HEK293 (cell line): ENCODE measurements at regions of chr22 and their contacts with region 1.

Region 1: DNA sequence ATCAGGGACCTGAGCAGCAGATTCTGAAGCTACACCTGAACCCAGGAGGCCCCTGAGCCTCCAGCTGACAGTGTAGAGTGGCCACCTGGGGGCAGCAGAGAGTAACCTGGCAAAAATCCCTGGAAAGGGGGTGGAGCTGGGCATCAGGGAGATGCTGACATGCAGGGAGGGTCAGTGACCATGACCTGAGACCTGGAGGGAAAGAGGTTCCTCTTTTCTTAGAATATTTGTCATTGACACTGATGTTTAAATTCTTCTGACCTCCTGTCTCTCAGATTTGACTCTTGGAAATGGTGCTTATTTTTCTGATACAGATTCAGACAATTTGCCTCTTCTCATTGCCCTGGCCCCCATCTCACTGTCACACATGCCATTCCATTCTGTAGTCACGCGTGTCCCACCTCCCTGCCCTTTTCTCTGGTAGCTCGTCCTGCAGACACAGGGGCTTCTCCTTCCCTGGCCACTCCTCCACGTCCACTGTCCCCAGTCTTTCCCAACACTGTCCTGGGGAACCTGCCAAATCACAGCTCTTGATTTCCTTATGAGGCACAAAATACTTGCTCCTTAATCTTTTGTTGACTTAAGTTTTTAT is 117.2 kb upstream of the IGLL5 start:
- H3K4me3 ChIP-seq: no peak overlapping the region
- H3K27ac ChIP-seq: no peak overlapping the region
- H3K4me1 ChIP-seq: no peaks in the 10 kb centered on the region
- CTCF ChIP-seq: peak; percentile 56

Region 2: GRCh38 chr22:22463855-22464540 is 306.4 kb before region 1 on chr22:
- CTCF ChIA-PET with region 1: interaction called, 14 read pairs
- POLR2A ChIA-PET with region 1: no interaction called
- H3K4me3 ChIP-seq: no peak overlapping the region
- H3K27ac ChIP-seq: no peak overlapping the region
- H3K4me1 ChIP-seq: no peaks in the 10 kb centered on the region
- CTCF ChIP-seq: peak; percentile 77

Region 3: DNA sequence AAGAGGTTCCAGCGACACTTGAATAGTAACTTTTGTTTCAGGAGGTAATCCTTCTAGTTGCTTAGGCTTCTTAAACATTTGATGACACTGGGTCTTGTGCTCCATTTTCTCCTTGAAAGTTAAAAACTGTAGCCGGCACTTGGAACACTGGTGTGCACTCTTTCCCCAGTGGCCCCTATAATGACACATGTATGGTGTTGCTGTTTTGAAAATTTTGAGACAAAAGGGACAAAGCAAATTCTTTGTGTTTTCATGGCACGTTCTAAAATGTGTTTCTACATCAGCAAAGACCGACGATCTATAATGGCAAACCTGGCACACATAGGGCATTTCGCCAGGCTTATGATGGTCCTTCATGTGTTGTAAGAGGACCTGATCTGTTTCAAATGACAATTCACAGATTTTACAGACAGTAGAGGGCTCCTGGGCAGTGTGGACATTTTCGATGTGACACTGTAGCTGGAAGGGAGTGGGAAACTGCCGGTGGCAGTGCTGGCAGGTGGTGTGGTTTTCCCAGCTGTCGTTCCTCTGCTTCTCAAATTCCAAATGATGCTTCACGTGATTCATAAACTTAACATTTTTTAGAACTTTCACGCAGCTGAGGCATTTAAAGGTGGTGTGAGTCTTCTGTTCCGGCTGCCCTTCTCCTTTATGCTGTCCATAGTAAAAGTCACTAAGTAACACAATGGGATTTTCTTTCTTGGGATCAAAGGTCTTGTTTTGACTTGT is 282.3 kb before region 1 on chr22:
- CTCF ChIA-PET with region 1: no interaction called
- POLR2A ChIA-PET with region 1: no interaction called
- H3K4me3 ChIP-seq: no peak overlapping the region
- H3K27ac ChIP-seq: no peak overlapping the region
- H3K4me1 ChIP-seq: no peaks in the 10 kb centered on the region
- CTCF ChIP-seq: no peak

Region 4: DNA sequence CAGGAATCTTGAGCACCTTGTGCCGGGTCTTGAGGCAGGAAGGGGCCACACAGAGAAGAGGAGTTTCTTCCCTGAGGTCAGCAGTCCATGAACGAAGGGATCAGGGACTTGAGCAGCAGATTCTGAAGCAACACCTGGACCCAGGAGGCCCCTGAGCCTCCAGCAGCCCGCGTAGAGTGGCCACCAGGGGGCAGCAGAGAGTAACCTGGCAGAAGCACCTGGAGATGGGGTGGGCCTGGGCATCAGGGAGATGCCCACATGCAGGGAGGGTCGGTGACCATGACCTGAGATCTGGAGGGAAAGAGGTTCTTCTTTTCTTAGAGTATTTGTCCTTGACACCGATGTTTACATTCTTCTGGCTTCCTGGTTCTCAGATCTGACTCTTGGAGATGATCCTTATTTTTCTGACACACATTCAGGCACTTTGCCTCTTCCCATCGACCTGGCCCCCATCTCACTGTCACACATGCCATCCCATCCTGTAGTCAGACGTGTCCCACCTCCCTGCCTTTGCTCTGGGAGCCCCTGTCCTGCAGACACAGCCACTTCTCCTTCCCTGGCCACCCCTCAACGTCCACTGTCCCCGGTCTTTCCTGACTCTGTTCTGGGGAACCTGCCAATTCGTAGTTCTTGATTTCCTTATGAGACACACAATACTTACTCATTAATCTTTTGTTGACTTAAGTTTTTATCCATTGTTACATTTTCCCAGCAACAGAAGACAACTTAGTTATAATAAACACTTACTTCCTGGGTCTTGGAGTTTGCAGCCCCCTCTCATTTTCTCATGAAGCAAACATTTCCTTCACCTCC is 59.5 kb before region 1 on chr22:
- CTCF ChIA-PET with region 1: interaction called, 13 read pairs
- POLR2A ChIA-PET with region 1: no interaction called
- H3K4me3 ChIP-seq: no peak overlapping the region
- H3K27ac ChIP-seq: no peak overlapping the region
- H3K4me1 ChIP-seq: no peaks in the 10 kb centered on the region
- CTCF ChIP-seq: peak; percentile 56; the same call in 1 of the 2 replicates

Region 5: DNA sequence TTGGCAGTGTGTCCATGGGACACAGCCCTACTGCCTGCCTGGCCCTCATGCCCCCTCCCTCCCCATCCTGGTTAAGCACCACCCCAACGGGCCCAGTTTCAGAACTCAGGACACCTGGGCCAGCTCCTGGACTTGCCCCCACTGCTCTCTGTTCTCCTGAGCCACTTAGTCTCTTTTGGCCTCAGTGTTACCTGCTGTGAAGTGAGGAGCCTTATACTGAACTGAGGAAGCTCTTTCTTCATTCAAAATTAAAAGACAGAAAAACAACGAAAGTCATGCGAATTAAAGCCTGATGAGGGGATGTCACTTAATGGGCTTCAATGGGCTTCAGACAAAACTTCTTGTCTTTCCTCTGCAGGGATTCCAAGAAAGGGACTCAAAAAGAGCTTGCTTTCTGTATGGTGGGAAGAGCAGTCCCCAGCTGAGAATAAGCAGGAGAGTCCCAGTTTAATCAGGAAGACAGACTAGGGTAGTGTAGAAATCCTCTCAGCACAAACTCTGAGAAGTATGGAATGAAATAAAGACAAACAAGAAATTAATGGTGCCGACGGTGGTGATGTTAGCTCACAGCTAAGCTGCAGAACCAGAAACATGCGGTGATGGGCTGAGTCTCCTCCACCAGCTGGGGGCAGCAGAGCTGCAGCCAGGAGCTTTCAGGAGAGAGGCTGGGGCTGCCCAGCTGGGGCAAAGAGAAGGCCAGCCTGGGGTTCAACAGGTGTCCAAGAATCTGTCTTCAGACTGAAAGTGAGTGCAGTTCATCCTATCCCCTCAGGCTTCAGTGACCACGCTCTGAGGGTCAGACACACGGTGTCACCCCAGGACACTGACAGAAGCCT is 24.9 kb before region 1 on chr22:
- CTCF ChIA-PET with region 1: interaction called, 12 read pairs
- POLR2A ChIA-PET with region 1: no interaction called
- H3K4me3 ChIP-seq: no peak overlapping the region
- H3K27ac ChIP-seq: no peak overlapping the region
- H3K4me1 ChIP-seq: no peaks in the 10 kb centered on the region
- CTCF ChIP-seq: peak; percentile 57; the same call in 1 of the 2 replicates

Region 6: GRCh38 chr22:22787786-22788459 is 17.5 kb after region 1 on chr22:
- CTCF ChIA-PET with region 1: interaction called, 158 read pairs
- POLR2A ChIA-PET with region 1: interaction called, 3 read pairs
- H3K4me3 ChIP-seq: no peak overlapping the region
- H3K27ac ChIP-seq: no peak overlapping the region
- H3K4me1 ChIP-seq: no peaks in the 10 kb centered on the region
- CTCF ChIP-seq: 0 out of 2 replicates have a peak, but pooled peaks have one; percentile 38

Region 7: GRCh38 chr22:22810018-22810427 is 39.6 kb after region 1 on chr22:
- CTCF ChIA-PET with region 1: interaction called, 15 read pairs
- POLR2A ChIA-PET with region 1: no interaction called
- H3K4me3 ChIP-seq: no peak overlapping the region
- H3K27ac ChIP-seq: no peak overlapping the region
- H3K4me1 ChIP-seq: no peaks in the 10 kb centered on the region
- CTCF ChIP-seq: 0 out of 2 replicates have a peak, but pooled peaks have one; percentile 19

Region 8: GRCh38 chr22:22877523-22878210 is 107.3 kb after region 1 on chr22:
- CTCF ChIA-PET with region 1: interaction called, 19 read pairs
- POLR2A ChIA-PET with region 1: no interaction called
- H3K4me3 ChIP-seq: no peak overlapping the region
- H3K27ac ChIP-seq: no peak overlapping the region
- H3K4me1 ChIP-seq: no peaks in the 10 kb centered on the region
- CTCF ChIP-seq: peak; percentile 32; the same call in 1 of the 2 replicates

Region 9: DNA sequence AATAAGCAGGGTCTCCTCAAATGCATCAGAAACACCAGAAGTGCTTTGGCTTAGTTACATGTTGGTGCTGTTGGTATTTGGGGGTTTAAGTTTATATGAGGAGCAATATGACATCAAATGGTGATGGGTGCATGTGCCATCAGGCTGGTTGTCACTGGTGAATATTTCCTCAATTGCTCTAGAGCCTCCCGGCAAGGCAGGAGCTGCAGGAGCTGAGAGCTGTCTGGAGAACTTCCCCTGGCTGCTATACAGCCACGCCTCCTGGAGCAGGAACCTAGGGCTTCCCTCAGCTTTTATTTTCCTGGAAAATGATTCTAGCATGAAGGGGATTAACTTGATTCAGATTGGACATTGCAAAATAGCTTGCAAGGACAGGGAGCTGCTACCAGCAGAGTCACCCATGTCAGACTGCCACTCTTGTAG is 133.0 kb after region 1 on chr22:
- CTCF ChIA-PET with region 1: no interaction called
- POLR2A ChIA-PET with region 1: no interaction called
- H3K4me3 ChIP-seq: no peak overlapping the region
- H3K27ac ChIP-seq: no peak overlapping the region
- H3K4me1 ChIP-seq: no peaks in the 10 kb centered on the region
- CTCF ChIP-seq: no peak